ENCODE measurements at regions of chr1 and their contacts with region 1.

Region 1: DNA sequence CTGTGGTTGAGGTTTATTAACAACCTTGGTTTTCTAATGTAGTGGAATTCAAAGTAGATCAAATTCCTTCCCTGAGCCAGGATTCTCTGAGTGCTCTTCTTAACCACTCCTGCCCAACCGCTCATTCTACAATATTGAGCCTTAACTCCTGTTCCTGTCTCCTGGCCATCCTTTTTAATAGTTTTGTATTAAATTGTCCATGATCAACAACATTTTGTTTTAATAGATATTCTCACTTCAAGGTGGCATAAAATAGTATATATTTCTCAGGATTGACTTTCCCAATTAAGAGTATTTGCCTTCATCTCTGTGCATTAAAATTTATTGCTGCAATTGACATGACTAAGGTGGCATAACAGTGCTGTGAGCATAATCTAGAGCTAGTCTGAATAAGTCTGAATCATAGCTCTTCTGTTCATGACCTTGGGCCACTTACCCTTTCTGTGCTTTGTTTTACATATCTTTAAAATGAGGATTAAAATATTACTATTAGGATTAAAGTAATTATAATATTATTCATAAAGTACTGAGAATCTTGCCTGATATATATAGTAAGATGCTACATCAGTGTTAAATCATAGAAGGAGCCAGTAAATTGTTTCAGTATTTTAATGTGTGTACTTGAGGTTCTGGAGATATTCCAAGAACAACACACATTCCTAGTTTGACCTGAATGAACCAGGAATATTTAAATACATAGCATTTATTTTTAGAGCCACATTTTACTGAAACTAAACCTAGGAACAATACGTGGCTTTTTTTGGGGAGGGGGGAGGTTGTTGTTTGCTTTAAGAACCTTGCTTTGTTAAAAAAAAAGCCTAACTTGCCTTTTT is 76.4 kb downstream of the ADGRL2 start:
- DNase-seq: no peak
- ATAC-seq: no peak

Region 2: GRCh38 chr1:81571946-81572345 is 305.2 kb before region 1 on chr1:
- intact Hi-C with region 1: no loop called
- DNase-seq: no peak
- ATAC-seq: no peak

Region 3: GRCh38 chr1:81731989-81732388 is 145.1 kb before region 1 on chr1:
- intact Hi-C with region 1: no loop called
- DNase-seq: no peak
- ATAC-seq: no peak

Region 4: DNA sequence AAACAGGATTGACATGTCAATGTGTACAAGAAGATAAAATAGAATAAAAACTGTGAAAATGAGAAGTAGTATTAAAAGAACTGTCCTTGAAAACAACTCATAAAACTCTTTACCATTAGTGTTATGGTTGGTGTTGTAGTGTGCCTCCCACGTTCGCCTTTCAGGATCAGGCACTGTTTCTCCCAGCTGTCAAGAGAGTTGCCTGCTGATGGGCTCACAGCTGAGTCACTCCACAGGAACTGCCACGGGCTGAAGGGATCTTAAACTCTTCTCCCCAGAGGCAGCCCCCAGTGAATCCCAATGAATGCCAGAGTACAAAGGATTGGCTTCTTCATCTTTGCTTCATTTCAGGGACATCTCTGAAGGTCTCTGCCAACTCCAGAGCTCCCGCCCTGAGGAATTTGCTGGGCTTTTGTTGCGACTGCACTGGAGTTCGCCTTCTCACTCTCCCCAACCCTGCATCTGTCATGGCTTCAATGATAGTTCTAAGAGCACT is 43.2 kb after region 1 on chr1:
- intact Hi-C with region 1: loop called (anchors 5 kb)
- DNase-seq: peak; percentile 37
- ATAC-seq: peak; percentile 91